HepG2 (cell line): ENCODE measurements at regions of chr20 and their contacts with region 1.

Region 1: DNA sequence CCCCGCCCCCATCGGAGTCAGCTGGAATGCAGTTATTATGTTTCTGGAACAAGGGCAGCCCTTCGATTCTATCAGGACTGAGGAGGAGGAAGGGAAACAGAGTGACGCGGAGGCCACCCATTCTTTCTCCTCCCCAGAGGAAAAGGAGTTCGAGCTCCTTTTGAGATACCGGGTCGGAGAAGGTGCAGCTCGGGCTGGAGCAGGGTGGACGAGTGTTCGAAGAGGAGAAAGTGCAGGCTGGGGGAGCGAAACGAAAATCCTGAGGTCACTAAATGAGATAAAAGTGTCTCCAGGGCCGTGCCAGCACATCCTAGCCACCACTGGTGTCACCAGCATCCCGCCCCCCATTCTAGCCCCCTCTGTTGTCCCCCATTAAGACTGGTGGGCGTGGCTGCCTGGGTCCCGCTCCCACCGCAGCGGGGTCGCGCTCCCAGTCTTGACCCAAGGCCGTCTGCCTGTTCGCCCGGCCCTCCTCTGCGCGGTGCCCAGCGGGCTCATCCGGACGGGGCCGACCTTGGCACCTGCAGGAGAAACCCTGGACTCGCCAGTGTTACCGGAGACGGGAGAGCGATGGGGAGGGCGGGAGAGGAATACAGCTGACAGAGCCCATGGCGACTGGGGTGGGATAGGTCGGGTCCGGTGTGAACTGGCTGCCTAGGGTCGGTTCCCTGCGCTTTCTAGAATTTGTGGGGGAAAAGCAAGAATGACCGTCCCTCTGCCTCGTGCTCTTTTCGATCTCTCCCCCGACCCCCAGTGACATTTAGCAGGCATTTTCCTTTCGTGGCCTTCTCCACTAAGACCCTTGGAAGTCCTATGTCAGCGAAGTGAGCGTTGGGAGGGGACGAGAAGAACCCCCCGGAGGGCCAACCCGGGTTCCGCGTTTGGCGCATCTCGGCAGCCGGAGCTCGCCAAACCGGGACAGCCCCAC is 16.2 kb downstream of the FOXA2 start:
- DNase-seq: no peak
- ATAC-seq: no peak
- H3K4me3 ChIP-seq: no peak overlapping the region
- H3K27ac ChIP-seq: no peak overlapping the region
- H3K4me1 ChIP-seq: peaks cover 58% of the 10 kb centered on the region
- H3K27me3 ChIP-seq: no peaks in the 10 kb centered on the region; a peak in 1 of 5 replicates
- CTCF ChIP-seq: no peak
- EP300 ChIP-seq: no peak
- POLR2A ChIP-seq: no peak
- RAD21 ChIP-seq: no peak

Region 2: DNA sequence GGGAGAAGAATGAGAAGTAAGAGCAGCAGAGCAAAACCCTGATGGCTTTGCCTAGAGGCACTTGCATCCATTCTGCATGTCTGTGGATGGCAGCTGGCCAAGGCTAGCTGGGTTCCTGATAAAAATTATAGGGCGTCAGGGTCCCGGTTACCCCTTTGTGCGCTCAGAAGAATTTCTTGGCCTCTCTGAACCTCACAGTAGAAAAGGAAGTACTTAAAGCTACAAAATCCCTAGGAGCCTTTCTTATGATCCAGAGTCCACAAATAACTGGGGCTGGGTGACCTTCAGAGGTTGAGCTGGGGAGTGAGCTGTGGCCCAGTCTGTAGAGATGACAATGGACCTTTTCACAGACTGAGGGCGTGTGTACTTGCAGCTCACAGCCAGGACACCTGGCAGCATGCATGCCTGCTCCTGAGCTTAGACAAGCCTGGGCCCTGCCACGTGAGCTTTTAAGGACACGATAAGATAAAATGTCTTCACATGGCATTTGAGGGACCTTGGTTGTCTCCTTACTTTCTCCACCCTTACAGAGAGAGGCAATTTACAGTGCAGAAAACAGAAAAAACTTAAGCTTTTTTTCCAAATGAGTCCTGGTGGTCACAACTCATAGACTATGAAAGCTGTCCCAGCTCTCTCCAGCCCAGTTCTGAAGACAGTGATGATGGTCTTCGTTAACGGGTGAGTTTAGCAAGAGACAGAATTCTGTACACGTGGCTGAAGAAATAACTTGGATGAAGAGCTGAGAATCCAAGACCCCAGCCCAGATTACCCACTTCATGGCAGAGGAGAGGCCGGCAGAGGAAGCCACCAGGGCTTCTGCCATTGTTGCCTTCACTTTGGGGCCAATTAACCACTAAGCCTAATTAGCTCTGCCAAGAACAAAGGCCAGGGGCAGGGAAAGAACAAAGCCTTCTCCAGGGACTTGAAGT is 34.1 kb before region 1 on chr20:
- CTCF ChIA-PET with region 1: no interaction called
- POLR2A ChIA-PET with region 1: interaction called, 11 read pairs
- in situ Hi-C with region 1: no loop called
- intact Hi-C with region 1: no loop called
- DNase-seq: peak; percentile 97
- ATAC-seq: peak; percentile 98
- H3K4me3 ChIP-seq: no peak overlapping the region
- H3K27ac ChIP-seq: peak overlapping the region; percentile 77
- H3K4me1 ChIP-seq: peaks cover 89% of the 10 kb centered on the region
- H3K27me3 ChIP-seq: no peaks in the 10 kb centered on the region
- CTCF ChIP-seq: peak; percentile 48
- EP300 ChIP-seq: peak; percentile 80 to 89; a peak in 3 of 4 replicates
- POLR2A ChIP-seq: 0 out of 4 replicates have a peak, but pooled peaks have one; percentile 26 to 48
- RAD21 ChIP-seq: peak; percentile 56; the same call in 1 of the 2 replicates